Natural killer cell (primary cell): ENCODE measurements at regions of chr9 and their contacts with region 1.

Region 1: DNA sequence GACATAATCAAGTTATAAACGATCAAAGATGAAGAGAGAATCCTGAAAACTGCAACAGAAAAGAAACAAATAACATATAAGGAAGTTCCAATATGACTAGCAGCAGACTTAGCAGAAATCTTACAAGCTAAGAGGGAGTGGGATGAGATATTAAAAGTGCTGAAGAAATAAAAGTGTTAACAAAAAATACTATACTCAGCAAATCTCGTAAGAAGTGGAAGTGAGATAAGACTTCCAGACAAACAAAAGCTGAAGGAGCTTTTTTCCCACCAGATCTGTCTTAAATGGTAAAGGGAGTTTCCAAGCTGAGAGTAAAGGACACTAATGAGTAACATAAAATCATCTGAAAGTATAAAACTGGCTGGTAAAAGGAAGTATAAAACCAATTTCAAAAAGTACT is 2036.0 kb upstream of the C9orf72 start:
- DNase-seq: no peak
- ATAC-seq: no peak
- H3K4me3 ChIP-seq: no peak overlapping the region
- H3K4me3 Mint-ChIP-seq: no peak overlapping the region
- H3K27ac ChIP-seq: no peak overlapping the region
- H3K27ac Mint-ChIP-seq: no peak overlapping the region
- H3K4me1 ChIP-seq: no peaks in the 10 kb centered on the region
- H3K4me1 Mint-ChIP-seq: no peaks in the 10 kb centered on the region
- H3K27me3 ChIP-seq: no peaks in the 10 kb centered on the region
- H3K27me3 Mint-ChIP-seq: no peaks in the 10 kb centered on the region
- CTCF ChIP-seq: no peak

Region 2: GRCh38 chr9:29668732-29669131 is 59.5 kb after region 1 on chr9:
- intact Hi-C with region 1: loop called (anchors 10 kb)
- DNase-seq: no peak
- ATAC-seq: no peak
- H3K4me3 ChIP-seq: no peak overlapping the region
- H3K4me3 Mint-ChIP-seq: no peak overlapping the region
- H3K27ac ChIP-seq: no peak overlapping the region
- H3K27ac Mint-ChIP-seq: no peak overlapping the region
- H3K4me1 ChIP-seq: no peaks in the 10 kb centered on the region
- H3K4me1 Mint-ChIP-seq: no peaks in the 10 kb centered on the region
- H3K27me3 ChIP-seq: no peaks in the 10 kb centered on the region
- H3K27me3 Mint-ChIP-seq: no peaks in the 10 kb centered on the region
- CTCF ChIP-seq: no peak